Activated T-helper 1 cell treated with anti-CD3 and anti-CD28 coated beads, Interleukin-12 subunit alpha, Interleukin-12 subunit beta, Interleukin-2, Interleukin-4 antibody, amounts not matched to agents 30 ng/mL and 10 ng/mL and 1 ng/mL, durations not matched to agents 14 hours and 24 hours and 36 hours (primary cell): ENCODE measurements at regions of chr6 and their contacts with region 1.

Region 1: GRCh38 chr6:148464319-148465010 is 121.8 kb downstream of the SASH1 start:
- DNase-seq: peak; percentile 26
- H3K4me3 Mint-ChIP-seq: no peak overlapping the region
- H3K27ac Mint-ChIP-seq: no peak overlapping the region
- H3K4me1 Mint-ChIP-seq: peaks cover 7% of the 10 kb centered on the region
- H3K27me3 Mint-ChIP-seq: peaks cover 33% of the 10 kb centered on the region

Region 2: DNA sequence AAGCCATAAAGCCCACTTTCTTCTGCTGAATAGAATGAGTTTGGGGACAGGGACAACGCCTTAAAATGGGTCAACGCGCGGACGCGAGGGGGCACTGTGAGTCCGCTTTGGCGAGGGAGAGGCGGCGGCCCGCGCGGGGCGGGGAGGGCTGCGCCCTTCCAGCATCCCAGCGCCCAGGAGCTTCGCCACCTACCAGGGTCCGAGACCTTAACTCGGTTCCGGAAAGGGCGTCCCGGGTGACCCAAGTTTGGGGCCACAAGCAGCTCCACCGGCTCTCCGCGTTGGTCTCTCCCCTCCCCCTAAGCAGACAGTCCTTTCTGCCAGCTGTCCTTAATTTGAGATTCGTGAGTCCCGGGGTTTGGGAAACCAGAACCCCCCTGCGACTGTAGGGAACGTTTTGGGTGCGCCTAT is 957.8 kb before region 1 on chr6:
- intact Hi-C with region 1: loop called (anchors 5 kb)
- DNase-seq: no peak
- H3K4me3 Mint-ChIP-seq: peak overlapping the region; percentile 57
- H3K27ac Mint-ChIP-seq: no peak overlapping the region
- H3K4me1 Mint-ChIP-seq: peaks cover 7% of the 10 kb centered on the region
- H3K27me3 Mint-ChIP-seq: peaks cover 43% of the 10 kb centered on the region

Region 3: GRCh38 chr6:148144917-148145521 is 319.4 kb before region 1 on chr6:
- intact Hi-C with region 1: loop called (anchors 1 kb)
- DNase-seq: peak; percentile 15
- H3K4me3 Mint-ChIP-seq: no peak overlapping the region
- H3K27ac Mint-ChIP-seq: no peak overlapping the region
- H3K4me1 Mint-ChIP-seq: peaks cover 8% of the 10 kb centered on the region
- H3K27me3 Mint-ChIP-seq: no peaks in the 10 kb centered on the region

Region 4: GRCh38 chr6:148177589-148178233 is 286.8 kb before region 1 on chr6:
- intact Hi-C with region 1: loop called (anchors 1 kb)
- DNase-seq: no peak
- H3K4me3 Mint-ChIP-seq: no peak overlapping the region
- H3K27ac Mint-ChIP-seq: no peak overlapping the region
- H3K4me1 Mint-ChIP-seq: no peaks in the 10 kb centered on the region
- H3K27me3 Mint-ChIP-seq: peaks cover 15% of the 10 kb centered on the region

Region 5: GRCh38 chr6:148342357-148343046 is 122.0 kb before region 1 on chr6 and contains the start of gene SASH1:
- intact Hi-C with region 1: loop called (anchors 5 kb)
- DNase-seq: no peak
- H3K4me3 Mint-ChIP-seq: peak within 1 kb of the TSS; percentile 83
- H3K27ac Mint-ChIP-seq: peak within 1 kb of the TSS; percentile 63
- H3K4me1 Mint-ChIP-seq: peaks cover 8% of the 10 kb centered on the region
- H3K27me3 Mint-ChIP-seq: peaks cover 60% of the 10 kb centered on the region
- total RNA-seq, gene SASH1: 0.86 and 1.4 TPM in 2 replicates